PC-3 (cell line): ENCODE measurements at regions of chr14 and their contacts with region 1.

Region 1: GRCh38 chr14:101980251-101981099 is 16.1 kb downstream of the DYNC1H1 start:
- DNase-seq: peak; percentile 98
- ATAC-seq: peak; percentile 88
- H3K4me3 ChIP-seq: peak overlapping the region; percentile 40
- H3K27ac ChIP-seq: peak overlapping the region; percentile 85
- H3K4me1 ChIP-seq: peaks cover 51% of the 10 kb centered on the region
- H3K27me3 ChIP-seq: no peaks in the 10 kb centered on the region
- CTCF ChIP-seq: no peak

Region 2: DNA sequence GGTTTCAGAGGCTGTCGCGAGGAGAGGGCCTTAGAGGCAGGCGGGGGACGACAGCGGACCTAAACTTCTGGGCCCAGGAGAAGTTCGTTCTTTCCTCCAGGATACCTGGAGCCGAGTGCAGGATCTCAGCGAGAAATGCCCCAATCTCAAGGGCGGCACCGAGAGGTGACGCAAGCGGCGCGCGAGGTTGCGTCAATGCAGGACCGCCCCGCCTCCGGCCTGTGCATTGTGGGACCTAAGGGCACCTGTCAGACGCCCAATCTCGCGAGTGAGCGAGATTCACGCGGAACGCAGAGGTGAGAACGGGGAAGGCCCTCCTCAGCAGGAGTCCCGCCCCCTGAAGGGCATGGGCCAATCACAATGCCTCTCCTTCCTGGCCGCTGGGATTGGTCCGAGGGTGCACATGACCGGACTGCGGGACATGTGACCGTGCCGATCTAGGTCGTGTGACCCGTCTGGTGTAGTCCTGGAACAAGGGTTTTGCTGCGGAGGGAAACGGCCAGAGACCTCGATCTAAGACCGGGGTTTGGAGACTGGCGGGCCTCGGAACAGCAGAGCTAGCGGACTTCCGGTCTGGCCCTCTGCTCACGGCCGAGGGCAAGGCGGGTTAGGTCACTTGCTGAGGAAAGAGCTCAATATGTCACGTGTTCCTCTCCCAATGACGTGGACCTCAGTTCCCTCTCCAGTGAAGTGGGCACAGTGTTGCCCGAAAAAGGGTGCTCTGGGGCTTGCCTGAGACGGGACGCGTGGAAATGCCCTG is 32.4 kb before region 1 on chr14:
- CTCF ChIA-PET with region 1: no interaction called
- POLR2A ChIA-PET with region 1: no interaction called
- intact Hi-C with region 1: no loop called
- DNase-seq: peak; percentile 100
- ATAC-seq: peak; percentile 96
- H3K4me3 ChIP-seq: peak overlapping the region; percentile 93
- H3K27ac ChIP-seq: peak overlapping the region; percentile 84
- H3K4me1 ChIP-seq: peaks cover 9% of the 10 kb centered on the region
- H3K27me3 ChIP-seq: no peaks in the 10 kb centered on the region
- CTCF ChIP-seq: no peak

Region 3: GRCh38 chr14:101997429-101998336 is 17.2 kb after region 1 on chr14:
- CTCF ChIA-PET with region 1: no interaction called
- POLR2A ChIA-PET with region 1: no interaction called
- intact Hi-C with region 1: no loop called
- DNase-seq: no peak
- ATAC-seq: no peak
- H3K4me3 ChIP-seq: no peak overlapping the region
- H3K27ac ChIP-seq: no peak overlapping the region
- H3K4me1 ChIP-seq: no peaks in the 10 kb centered on the region
- H3K27me3 ChIP-seq: no peaks in the 10 kb centered on the region
- CTCF ChIP-seq: no peak

Region 4: DNA sequence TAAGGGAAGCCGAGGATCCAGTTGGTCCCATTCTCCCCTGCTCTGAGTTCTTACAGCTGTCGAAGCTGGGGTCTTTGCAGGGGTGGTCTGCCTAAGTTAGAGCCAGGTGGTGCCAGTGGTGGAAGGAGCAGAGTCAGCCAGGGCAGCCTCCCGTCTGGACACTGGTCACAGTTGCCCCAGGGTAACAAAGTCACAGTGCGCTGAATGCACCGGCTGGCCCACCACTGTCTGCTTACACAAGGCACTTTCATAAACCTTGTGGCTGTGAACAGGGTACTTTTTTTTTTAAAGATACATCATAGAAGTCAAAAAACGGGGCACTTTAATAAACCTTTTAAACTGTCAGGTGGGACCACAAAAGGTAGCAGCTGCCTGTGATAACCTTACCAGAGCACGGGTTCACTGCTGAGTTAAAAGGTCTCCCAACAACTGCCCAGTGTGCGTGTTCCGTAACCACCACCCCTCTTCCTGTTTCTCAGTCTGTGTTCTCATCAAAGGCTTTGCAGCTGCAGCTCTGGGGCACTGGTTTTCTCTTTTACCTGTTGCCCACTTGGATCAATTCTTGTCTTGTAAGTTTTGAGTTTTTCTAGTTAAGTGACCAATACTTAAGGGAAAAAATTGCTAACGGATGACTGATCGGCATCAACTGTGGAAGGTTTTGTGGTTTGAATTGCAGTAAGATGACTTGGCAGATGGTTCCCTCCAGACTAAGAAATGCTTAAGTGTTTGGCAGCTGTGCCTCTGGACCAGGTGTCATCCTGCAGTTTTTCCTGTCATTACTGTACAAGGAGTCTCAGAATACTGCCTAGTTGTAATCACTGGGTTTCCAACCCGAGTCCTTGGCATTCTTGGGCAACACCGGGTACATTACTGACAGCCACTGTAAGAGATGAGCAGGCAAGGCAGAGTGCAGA is 39.8 kb after region 1 on chr14:
- CTCF ChIA-PET with region 1: no interaction called
- POLR2A ChIA-PET with region 1: interaction called, 18 read pairs
- intact Hi-C with region 1: no loop called
- DNase-seq: peak; percentile 88
- ATAC-seq: peak; percentile 67
- H3K4me3 ChIP-seq: no peak overlapping the region
- H3K27ac ChIP-seq: peak overlapping the region; percentile 58
- H3K4me1 ChIP-seq: peaks cover 20% of the 10 kb centered on the region
- H3K27me3 ChIP-seq: no peaks in the 10 kb centered on the region
- CTCF ChIP-seq: no peak

Region 5: DNA sequence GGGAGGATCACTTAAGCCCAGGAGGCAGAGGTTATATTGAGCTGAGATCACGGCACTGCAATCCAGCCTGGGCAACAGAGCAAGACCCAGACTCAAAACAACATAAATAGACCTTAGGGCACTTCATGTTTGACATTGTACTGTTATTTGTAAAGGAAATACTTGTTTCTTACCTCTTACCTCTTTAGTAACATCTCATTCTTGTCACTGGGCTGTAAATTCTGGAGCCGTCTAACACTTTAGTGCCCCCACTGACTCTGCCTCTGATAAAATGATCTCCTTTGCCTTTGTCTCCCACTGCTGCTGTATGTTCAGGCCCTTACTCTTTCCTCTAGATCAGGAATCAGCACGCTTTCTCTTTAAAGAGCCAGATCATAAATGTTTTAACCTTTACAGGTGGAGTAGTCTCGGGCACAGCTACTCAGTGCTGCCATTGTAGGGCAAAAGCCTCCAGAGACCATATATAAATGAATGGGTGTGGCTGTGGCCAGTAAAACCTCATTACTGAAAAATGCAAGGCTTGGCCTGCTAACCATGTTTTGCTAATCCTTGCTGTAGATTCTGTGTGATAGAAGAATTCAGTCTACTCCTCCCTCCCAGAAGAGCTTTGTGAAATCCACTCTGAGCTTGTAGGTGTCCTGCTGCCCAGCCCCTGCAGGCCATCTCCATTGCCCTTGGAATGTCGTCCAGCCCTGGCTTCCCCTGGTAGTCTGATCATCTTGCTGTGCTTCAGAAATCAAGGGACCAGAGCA is 48.1 kb after region 1 on chr14:
- CTCF ChIA-PET with region 1: interaction called, 11 read pairs
- POLR2A ChIA-PET with region 1: no interaction called
- intact Hi-C with region 1: no loop called
- DNase-seq: peak; percentile 96
- ATAC-seq: peak; percentile 91
- H3K4me3 ChIP-seq: peak overlapping the region; percentile 25
- H3K27ac ChIP-seq: peak overlapping the region; percentile 83
- H3K4me1 ChIP-seq: peaks cover 43% of the 10 kb centered on the region
- H3K27me3 ChIP-seq: no peaks in the 10 kb centered on the region
- CTCF ChIP-seq: no peak